Activated CD4-positive, alpha-beta T cell treated with anti-CD3 and anti-CD28 coated beads, Interleukin-2, amount 10 ng/mL, durations not matched to agents 24 days and 14 days (primary cell): ENCODE measurements at regions of chr3 and their contacts with region 1.

Region 1: GRCh38 chr3:60017631-60018030 is 967.8 kb upstream of the CFAP20DC start:
- DNase-seq: peak; percentile 89
- H3K4me3 Mint-ChIP-seq: peak overlapping the region; percentile 73
- H3K27ac Mint-ChIP-seq: peak overlapping the region; percentile 94
- H3K4me1 Mint-ChIP-seq: peaks cover 51% of the 10 kb centered on the region
- H3K27me3 Mint-ChIP-seq: no peaks in the 10 kb centered on the region

Region 2: GRCh38 chr3:59935025-59935424 is 82.6 kb before region 1 on chr3:
- intact Hi-C with region 1: loop called (anchors 2 kb)
- DNase-seq: peak; percentile 62
- H3K4me3 Mint-ChIP-seq: peak overlapping the region; percentile 58
- H3K27ac Mint-ChIP-seq: peak overlapping the region; percentile 88
- H3K4me1 Mint-ChIP-seq: peaks cover 28% of the 10 kb centered on the region
- H3K27me3 Mint-ChIP-seq: no peaks in the 10 kb centered on the region

Region 3: DNA sequence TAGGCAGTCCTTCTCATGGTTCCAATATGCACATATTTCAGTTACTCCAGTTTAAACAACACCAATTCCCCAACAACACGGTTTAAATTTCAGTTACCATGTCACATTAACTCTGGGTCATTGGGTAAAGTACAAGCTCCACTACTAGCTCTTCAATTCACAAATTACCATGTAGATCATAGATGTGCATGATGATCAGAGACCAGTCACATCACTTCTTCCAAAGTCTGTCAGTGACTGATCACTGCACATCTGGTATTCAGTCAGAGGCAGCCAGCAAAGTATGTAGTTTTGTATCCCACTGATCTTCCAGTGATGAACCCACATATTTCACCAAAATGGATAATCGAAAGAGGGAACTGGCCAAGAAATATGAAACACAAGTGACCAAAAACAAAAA is 10.6 kb after region 1 on chr3:
- intact Hi-C with region 1: no loop called
- DNase-seq: no peak
- H3K4me3 Mint-ChIP-seq: peak overlapping the region; percentile 5
- H3K27ac Mint-ChIP-seq: peak overlapping the region; percentile 55
- H3K4me1 Mint-ChIP-seq: peaks cover 50% of the 10 kb centered on the region
- H3K27me3 Mint-ChIP-seq: no peaks in the 10 kb centered on the region

Region 4: GRCh38 chr3:60048447-60048848 is 30.8 kb after region 1 on chr3:
- intact Hi-C with region 1: loop called (anchors 1 kb)
- DNase-seq: peak; percentile 91
- H3K4me3 Mint-ChIP-seq: peak overlapping the region; percentile 80
- H3K27ac Mint-ChIP-seq: peak overlapping the region; percentile 91
- H3K4me1 Mint-ChIP-seq: peaks cover 70% of the 10 kb centered on the region
- H3K27me3 Mint-ChIP-seq: no peaks in the 10 kb centered on the region